Activated CD4-positive, alpha-beta T cell treated with anti-CD3 and anti-CD28 coated beads, Interleukin-2, amount 10 ng/mL, durations not matched to agents 24 days and 14 days (primary cell): ENCODE measurements at regions of chr2 and their contacts with region 1.

Region 1: GRCh38 chr2:61764035-61764800 is 89.6 kb downstream of the FAM161A start:
- DNase-seq: peak; percentile 99
- H3K4me3 Mint-ChIP-seq: peak overlapping the region; percentile 95
- H3K27ac Mint-ChIP-seq: peak overlapping the region; percentile 97
- H3K4me1 Mint-ChIP-seq: peaks cover 12% of the 10 kb centered on the region
- H3K27me3 Mint-ChIP-seq: peaks cover 1% of the 10 kb centered on the region

Region 2: DNA sequence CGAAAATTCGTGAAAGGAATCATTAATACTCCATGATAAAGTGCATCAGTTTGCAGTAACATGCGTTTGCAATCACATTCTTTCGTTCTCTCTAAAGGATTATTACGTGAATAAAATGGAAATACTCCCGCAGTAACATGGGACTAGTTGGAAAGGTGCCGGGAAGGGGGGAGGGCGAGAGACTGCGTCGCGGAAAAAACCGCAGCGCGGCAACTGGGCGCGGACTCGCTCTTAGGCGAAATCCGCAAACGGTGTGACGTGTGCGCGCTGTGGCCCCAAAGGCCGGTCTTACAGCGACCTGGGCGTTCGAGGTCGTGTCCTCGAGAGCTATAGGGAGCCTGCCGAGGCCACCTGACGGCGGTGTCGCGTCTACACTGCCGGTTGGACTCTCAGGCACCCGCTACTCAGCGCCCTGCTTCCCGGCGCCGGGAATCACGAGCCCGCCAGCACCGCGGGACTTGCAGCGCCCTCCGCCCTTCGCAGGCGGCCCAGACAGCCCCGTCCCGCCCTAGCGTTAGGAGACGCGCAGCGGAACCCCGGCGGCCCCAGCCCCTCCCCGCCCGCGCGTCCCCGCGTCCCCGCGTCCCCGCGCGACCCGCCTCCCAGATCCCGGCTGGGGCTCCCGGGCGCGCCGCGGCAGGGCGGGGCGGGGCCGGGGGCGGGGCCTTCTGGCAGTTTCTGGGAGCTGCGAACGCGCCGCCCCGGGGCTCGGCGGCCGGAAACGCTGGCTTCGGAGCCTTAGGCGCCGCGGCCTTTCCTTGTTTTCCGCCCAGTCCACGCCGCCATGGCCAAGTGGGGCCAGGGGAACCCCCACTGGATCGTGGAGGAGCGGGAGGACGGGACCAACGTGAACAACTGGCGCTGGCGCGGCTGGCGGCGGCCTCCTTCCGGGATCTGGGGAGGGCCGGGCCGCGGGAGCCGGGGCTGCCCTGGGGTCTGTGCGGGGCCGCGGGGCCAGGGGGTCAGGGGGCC is 587.2 kb before region 1 on chr2:
- intact Hi-C with region 1: loop called (anchors 1 kb)
- DNase-seq: peak; percentile 99
- H3K4me3 Mint-ChIP-seq: peak overlapping the region; percentile 90
- H3K27ac Mint-ChIP-seq: peak overlapping the region; percentile 82
- H3K4me1 Mint-ChIP-seq: peaks cover 50% of the 10 kb centered on the region
- H3K27me3 Mint-ChIP-seq: peaks cover 9% of the 10 kb centered on the region

Region 3: GRCh38 chr2:61575447-61575859 is 188.8 kb before region 1 on chr2:
- intact Hi-C with region 1: no loop called
- DNase-seq: no peak
- H3K4me3 Mint-ChIP-seq: peak overlapping the region; percentile 3
- H3K27ac Mint-ChIP-seq: peak overlapping the region; percentile 64
- H3K4me1 Mint-ChIP-seq: peaks cover 9% of the 10 kb centered on the region
- H3K27me3 Mint-ChIP-seq: no peaks in the 10 kb centered on the region

Region 4: DNA sequence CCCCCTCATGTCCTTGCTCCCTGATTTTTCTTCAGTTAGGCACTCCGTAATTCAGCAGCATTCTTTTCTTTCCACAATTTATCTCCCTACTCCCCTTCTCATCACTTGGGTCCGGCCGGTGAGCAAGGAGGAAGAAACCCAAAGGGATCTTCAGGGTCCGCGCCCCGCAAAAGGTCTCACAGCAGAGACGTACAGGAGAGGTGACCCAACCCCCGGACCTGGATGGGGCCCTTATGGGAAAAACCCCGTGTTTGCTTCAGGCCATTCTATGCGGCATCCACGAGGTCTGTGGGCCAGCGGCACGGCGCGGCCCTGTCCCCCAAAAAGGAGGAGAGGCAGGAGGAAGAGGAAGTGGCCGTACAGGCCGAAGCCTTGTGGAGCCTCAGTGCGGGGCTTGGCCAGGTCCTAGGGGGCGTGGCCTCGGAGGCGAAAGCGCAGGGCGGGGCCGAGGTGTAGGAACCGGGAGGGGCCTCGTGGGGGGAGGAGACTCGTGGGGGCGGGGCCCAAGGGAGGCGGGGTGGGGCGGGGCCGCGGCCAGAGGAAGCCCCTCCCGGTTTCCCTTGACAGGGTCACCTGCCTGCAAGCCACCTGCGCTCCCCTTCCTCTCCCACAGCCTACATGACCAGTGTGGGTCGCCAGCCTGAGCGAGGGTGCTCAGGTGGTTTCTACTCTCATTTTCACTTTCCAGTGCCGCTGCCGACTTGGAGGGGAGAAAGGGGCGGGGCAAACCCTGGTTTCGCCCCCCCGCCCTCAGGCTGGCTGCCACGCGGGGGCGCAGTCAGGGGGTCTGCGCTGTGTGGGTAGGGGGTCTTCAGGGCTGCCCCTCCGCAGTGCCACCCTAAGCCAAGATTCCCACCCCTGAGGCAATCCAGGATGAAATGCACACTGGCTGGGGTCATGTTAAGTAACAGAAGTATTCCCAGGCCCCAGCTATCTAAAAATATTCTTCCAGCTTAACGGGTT is 69.6 kb before region 1 on chr2:
- intact Hi-C with region 1: loop called (anchors 1 kb)
- DNase-seq: peak; percentile 95
- H3K4me3 Mint-ChIP-seq: peak overlapping the region; percentile 92
- H3K27ac Mint-ChIP-seq: peak overlapping the region; percentile 93
- H3K4me1 Mint-ChIP-seq: peaks cover 15% of the 10 kb centered on the region
- H3K27me3 Mint-ChIP-seq: peaks cover 2% of the 10 kb centered on the region

Region 5: DNA sequence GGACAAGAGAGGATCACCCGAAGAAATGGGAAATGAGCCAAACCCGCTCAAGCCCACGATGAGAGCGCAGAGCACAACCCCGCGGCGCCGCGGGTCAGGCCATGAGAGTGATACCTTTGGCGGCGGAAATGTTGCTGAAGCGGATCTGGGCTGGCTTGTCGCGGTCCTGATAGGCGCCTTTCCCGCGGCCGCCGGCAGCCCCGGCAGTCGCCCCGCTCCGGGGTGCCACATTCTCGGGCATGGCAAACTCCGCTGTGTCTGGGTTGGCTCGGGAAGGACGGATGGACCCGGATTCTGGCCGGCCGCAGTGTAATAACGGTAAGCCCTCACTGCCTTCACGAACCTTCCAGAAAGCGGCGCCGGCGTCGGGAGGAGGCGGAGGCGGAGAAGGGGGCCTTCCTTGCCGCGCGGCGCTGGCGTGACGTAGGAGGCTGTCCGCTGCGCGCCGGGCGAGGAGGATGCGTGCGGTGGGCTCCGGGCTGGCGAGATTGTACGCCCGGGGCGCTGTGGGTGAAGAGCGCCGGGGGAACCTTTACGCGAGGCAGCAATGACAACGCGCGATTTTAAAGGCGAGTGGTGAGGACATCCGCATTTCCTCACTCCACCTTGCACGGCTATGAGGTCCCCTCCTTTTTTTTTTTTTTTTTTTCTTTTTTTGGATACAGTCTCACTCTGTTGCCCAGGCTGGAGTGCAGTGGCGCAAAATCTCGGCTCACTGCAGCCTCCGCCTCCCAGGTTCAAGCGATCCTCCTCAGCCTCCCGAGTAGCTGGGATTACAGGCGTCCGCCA is 124.2 kb after region 1 on chr2 and contains the start of gene CCT4:
- intact Hi-C with region 1: loop called (anchors 1 kb)
- DNase-seq: peak; percentile 97
- H3K4me3 Mint-ChIP-seq: peak within 1 kb of the TSS; percentile 99
- H3K27ac Mint-ChIP-seq: peak within 1 kb of the TSS; percentile 99
- H3K4me1 Mint-ChIP-seq: peaks cover 22% of the 10 kb centered on the region
- H3K27me3 Mint-ChIP-seq: no peaks in the 10 kb centered on the region
- total RNA-seq, gene CCT4: 398 and 407 TPM in 2 replicates

Region 6: DNA sequence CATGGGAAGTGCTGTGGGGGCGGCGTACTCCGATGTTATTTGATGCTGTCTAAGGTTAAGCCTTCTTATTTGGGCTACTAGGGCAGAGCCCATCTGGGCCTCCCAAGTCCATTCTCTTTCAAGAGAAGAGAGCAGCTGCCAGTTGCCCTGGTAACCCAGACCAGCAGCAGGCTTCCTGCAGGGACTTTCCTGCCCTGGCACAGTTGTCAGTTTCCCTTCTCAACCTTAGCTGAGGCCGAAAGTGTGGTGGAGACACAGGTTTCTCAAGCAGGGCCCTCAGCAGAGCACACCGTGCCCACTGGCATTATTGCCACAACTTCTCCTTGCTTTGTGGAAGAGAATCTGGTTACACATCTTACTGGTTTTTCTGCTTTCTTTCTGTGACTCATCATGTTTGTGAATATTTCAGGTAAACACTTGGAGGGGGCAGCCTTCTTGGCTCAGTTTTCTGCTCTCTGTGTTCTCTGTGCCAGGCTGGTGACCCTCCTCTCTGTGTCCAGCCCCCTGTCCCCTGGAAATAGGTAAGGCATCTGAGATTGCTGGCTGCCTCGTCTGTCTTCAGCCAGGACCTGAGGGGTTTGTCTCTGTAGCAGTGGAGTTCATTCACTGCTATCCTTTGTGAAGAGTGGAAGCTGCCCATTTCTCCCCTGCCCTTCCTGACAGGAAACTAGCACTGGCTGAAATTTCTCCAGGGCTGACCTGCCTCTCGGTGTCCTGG is 542.7 kb after region 1 on chr2:
- intact Hi-C with region 1: loop called (anchors 5 kb)
- DNase-seq: peak; percentile 82
- H3K4me3 Mint-ChIP-seq: peak overlapping the region; percentile 60
- H3K27ac Mint-ChIP-seq: peak overlapping the region; percentile 94
- H3K4me1 Mint-ChIP-seq: peaks cover 71% of the 10 kb centered on the region
- H3K27me3 Mint-ChIP-seq: peaks cover 1% of the 10 kb centered on the region